ENCODE measurements at regions of chr6 and their contacts with region 1.

Region 1: GRCh38 chr6:11353921-11354389 is 121.5 kb upstream of the NEDD9 start:
- DNase-seq: peak; percentile 94
- H3K4me3 ChIP-seq: peak overlapping the region in 1 of 3 experiments; percentile 7
- H3K27ac ChIP-seq: peak overlapping the region; percentile 97
- H3K4me1 ChIP-seq: peaks cover 31% of the 10 kb centered on the region
- H3K27me3 ChIP-seq: no peaks in the 10 kb centered on the region
- CTCF ChIP-seq: no peak
- POLR2A ChIP-seq: no peak

Region 2: DNA sequence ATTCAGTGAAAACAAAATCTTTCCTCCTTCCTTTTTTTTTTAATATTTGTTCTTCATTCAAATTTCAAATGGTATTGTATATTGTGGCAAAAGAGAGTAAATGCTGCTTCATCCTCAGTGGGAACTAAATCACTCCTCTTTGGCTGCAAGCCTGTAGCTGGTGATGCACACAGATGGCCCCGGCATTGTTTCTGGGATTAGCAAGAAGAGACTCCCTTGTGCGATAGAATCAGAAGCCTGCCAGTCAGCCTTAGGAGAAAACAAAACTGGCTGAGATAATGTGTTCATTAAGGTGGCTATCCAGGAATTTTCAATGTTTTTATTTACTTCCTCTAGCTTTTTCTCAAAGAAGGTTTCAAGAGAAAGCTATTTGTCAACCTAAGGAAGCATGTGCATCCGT is 289.1 kb before region 1 on chr6:
- CTCF ChIA-PET with region 1: no interaction called
- POLR2A ChIA-PET with region 1: no interaction called
- dilution Hi-C with region 1: no loop called
- intact Hi-C with region 1: no loop called
- DNase-seq: no peak
- H3K4me3 ChIP-seq: no peak overlapping the region
- H3K27ac ChIP-seq: no peak overlapping the region
- H3K4me1 ChIP-seq: no peaks in the 10 kb centered on the region
- H3K27me3 ChIP-seq: peaks cover 0 to 3% of the 10 kb centered on the region in 2 experiments
- CTCF ChIP-seq: no peak
- POLR2A ChIP-seq: no peak

Region 3: DNA sequence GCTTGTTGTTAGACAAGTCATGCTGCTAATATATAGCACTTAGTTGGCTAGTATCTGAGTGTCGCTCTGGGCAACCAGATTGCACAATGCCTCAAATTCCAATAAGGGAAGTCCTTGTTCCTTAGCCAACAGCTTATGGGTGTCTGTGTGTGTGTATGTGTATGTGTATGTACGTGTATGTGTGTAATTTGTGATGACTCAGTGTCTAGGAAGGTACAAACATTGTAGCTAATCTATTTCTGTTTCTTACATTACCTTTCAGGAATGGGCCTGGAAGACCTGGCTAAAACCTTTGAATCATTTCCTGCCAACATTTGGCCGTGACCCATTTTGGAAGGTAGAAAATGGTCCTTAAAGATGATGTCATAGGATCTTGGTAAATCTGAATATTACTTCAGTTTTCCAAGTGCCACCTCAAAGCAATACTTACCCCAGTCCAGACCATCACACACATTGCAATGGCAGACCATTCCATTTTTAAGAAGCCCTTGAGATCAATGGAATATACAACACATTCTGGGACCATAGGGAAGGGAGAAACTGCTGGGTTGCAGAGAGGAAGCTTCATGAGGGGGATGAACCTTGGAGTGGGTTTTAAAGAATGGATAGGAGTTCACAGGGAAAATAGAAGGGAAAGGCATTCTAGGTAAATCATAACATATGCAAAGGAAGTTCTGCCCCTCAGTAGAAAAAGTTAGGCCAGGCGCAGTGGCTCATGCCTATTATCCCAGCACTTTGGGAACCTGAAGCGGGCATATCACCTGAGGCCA is 146.6 kb before region 1 on chr6:
- CTCF ChIA-PET with region 1: no interaction called
- POLR2A ChIA-PET with region 1: no interaction called
- dilution Hi-C with region 1: no loop called
- intact Hi-C with region 1: loop called (anchors 1 kb)
- DNase-seq: peak; percentile 96
- H3K4me3 ChIP-seq: no peak overlapping the region
- H3K27ac ChIP-seq: peak overlapping the region; percentile 95
- H3K4me1 ChIP-seq: peaks cover 69% of the 10 kb centered on the region
- H3K27me3 ChIP-seq: no peaks in the 10 kb centered on the region
- CTCF ChIP-seq: no peak
- POLR2A ChIP-seq: peak; percentile 43

Region 4: DNA sequence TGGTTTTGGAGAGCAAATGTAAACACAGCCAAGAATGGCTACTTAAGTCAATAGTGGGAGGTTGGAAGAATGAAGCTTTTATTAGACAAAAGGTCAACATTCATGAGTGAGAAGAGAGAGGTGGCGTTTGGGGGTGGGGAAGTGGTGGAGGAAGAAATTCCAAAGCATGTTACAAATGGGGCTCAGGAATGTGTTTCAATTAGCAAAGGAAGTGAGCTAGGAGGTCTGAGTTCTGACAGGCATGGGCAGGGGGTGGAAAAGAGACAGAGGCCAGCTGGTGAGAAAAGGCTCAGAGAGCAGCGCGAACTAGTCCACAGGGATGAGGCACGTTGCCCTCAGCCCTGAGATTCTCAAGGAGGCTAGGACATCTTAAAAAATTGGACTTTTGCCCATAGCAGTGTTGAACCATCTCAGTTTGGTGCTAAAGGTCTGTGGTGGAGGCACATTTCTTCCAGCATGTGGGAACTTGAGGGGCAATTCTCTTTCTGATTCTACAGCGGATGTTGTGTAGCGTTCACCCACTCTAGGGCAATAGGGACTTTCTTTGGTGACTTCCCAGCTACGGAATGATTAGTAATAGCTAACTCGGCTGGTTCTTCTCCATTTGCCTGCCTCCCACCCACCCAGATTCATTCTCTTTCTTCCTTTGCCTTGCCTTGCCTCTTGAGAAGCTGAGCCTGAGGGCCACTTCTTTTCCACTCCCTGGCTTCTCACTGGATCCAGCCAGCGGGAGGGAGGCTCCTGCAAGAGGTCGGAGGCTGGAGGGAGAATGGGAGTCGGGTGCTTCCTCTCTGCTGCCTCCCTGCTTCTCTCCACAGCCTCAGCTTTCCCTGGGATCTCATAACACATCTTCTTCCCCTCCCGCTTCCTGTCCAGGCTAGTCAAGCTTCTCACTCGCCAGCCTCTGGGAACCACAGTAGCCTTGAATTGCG is 76.4 kb before region 1 on chr6:
- CTCF ChIA-PET with region 1: no interaction called
- POLR2A ChIA-PET with region 1: no interaction called
- dilution Hi-C with region 1: no loop called
- intact Hi-C with region 1: loop called (anchors 1 kb)
- DNase-seq: peak; percentile 71
- H3K4me3 ChIP-seq: no peak overlapping the region
- H3K27ac ChIP-seq: peak overlapping the region; percentile 51
- H3K4me1 ChIP-seq: peaks cover 12% of the 10 kb centered on the region
- H3K27me3 ChIP-seq: no peaks in the 10 kb centered on the region
- CTCF ChIP-seq: no peak
- POLR2A ChIP-seq: no peak

Region 5: GRCh38 chr6:11324453-11325015 is 29.4 kb before region 1 on chr6:
- CTCF ChIA-PET with region 1: no interaction called
- POLR2A ChIA-PET with region 1: no interaction called
- dilution Hi-C with region 1: no loop called
- intact Hi-C with region 1: no loop called
- DNase-seq: no peak
- H3K4me3 ChIP-seq: no peak overlapping the region
- H3K27ac ChIP-seq: no peak overlapping the region
- H3K4me1 ChIP-seq: no peaks in the 10 kb centered on the region
- H3K27me3 ChIP-seq: no peaks in the 10 kb centered on the region
- CTCF ChIP-seq: no peak
- POLR2A ChIP-seq: no peak

Region 6: GRCh38 chr6:11390016-11390415 is 36.1 kb after region 1 on chr6:
- CTCF ChIA-PET with region 1: no interaction called
- POLR2A ChIA-PET with region 1: no interaction called
- dilution Hi-C with region 1: no loop called
- intact Hi-C with region 1: loop called (anchors 1 kb)
- DNase-seq: peak; percentile 83
- H3K4me3 ChIP-seq: no peak overlapping the region
- H3K27ac ChIP-seq: peak overlapping the region; percentile 68
- H3K4me1 ChIP-seq: peaks cover 28% of the 10 kb centered on the region
- H3K27me3 ChIP-seq: peaks cover 2 to 4% of the 10 kb centered on the region in 2 experiments
- CTCF ChIP-seq: no peak
- POLR2A ChIP-seq: no peak

Region 7: GRCh38 chr6:11439017-11439420 is 85.1 kb after region 1 on chr6:
- CTCF ChIA-PET with region 1: no interaction called
- POLR2A ChIA-PET with region 1: no interaction called
- dilution Hi-C with region 1: no loop called
- intact Hi-C with region 1: no loop called
- DNase-seq: peak; percentile 91
- H3K4me3 ChIP-seq: no peak overlapping the region
- H3K27ac ChIP-seq: peak overlapping the region; percentile 56
- H3K4me1 ChIP-seq: peaks cover 19% of the 10 kb centered on the region
- H3K27me3 ChIP-seq: no peaks in the 10 kb centered on the region
- CTCF ChIP-seq: no peak
- POLR2A ChIP-seq: no peak

Region 8: DNA sequence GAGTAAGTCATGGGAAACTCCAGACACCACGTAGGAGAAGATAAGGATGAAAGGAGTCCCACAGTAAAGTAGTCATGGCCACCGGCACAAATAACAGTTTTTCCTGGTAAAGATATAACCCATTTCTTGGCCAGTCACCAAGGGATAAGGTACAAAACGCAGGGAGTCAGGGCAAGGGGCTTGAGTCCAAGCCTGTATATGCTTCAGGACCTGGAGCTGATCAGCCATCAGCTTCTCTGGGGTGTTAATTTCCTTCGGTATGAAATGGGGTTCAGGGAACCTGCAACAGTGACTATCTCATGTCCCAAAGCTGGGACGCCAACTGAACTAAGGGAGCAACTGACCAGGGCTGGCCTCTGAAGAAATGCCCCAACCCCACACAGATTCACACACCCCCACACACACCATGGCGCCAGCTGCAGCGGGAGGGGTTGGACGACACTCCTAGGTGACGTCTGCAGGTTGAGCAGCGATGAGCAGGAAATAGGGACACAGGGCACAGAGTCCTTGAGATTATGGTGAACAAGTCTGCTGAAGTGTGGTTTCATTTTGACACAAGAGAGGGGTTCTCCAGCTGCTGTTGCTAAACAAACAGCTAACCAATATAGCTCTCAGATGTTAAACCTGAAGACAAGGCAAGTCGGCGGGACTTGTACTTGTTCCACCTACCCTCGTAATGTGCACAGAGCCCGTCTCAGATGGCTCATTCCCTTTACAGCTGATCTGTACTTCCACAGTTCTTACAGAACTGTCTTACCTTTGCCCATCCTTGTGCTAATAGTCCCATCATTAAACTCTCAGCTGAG is 432.0 kb after region 1 on chr6:
- CTCF ChIA-PET with region 1: no interaction called
- POLR2A ChIA-PET with region 1: no interaction called
- dilution Hi-C with region 1: no loop called
- intact Hi-C with region 1: no loop called
- DNase-seq: no peak
- H3K4me3 ChIP-seq: no peak overlapping the region
- H3K27ac ChIP-seq: no peak overlapping the region
- H3K4me1 ChIP-seq: no peaks in the 10 kb centered on the region
- H3K27me3 ChIP-seq: peaks cover 2 to 3% of the 10 kb centered on the region in 2 experiments
- CTCF ChIP-seq: no peak
- POLR2A ChIP-seq: no peak